Dendritic cell treated with granulocyte-macrophage colony-stimulating factor and Interleukin-4, amounts not matched to agents 40 ng/mL and 50 ng/mL, for 4 days (primary cell): ENCODE measurements at regions of chr17 and their contacts with region 1.

Region 1: GRCh38 chr17:75046582-75047289 is at the starts of genes ATP5PD and KCTD2:
- H3K4me3 Mint-ChIP-seq: peak within 1 kb of the TSS; percentile 99
- H3K27ac Mint-ChIP-seq: peak within 1 kb of the TSS; percentile 99
- H3K4me1 Mint-ChIP-seq: peaks cover 30% of the 10 kb centered on the region
- H3K27me3 Mint-ChIP-seq: no peaks in the 10 kb centered on the region

Region 2: GRCh38 chr17:75033346-75034235 is 13.1 kb before region 1 on chr17:
- intact Hi-C with region 1: loop called (anchors 2 kb)
- H3K4me3 Mint-ChIP-seq: peak overlapping the region; percentile 85
- H3K27ac Mint-ChIP-seq: peak overlapping the region; percentile 86
- H3K4me1 Mint-ChIP-seq: peaks cover 42% of the 10 kb centered on the region
- H3K27me3 Mint-ChIP-seq: peaks cover 25% of the 10 kb centered on the region